GM12878 (cell line): ENCODE measurements at regions of chr6 and their contacts with region 1.

Region 1: GRCh38 chr6:11833626-11834592 is 55.3 kb upstream of the ADTRP start:
- DNase-seq: peak; percentile 84
- ATAC-seq: peak; percentile 84
- H3K4me3 ChIP-seq: peak overlapping the region; percentile 0; the same call in 1 of the 2 replicates
- H3K27ac ChIP-seq: peak overlapping the region; percentile 95
- H3K4me1 ChIP-seq: peaks cover 45% of the 10 kb centered on the region
- H3K27me3 ChIP-seq: no peaks in the 10 kb centered on the region
- CTCF ChIP-seq: no peak
- EP300 ChIP-seq: peak; percentile 97 to 100
- POLR2A ChIP-seq: peak; percentile 41; the same call in 1 of the 2 replicates
- RAD21 ChIP-seq: peak; percentile 42; the same call in 1 of the 2 replicates

Region 2: DNA sequence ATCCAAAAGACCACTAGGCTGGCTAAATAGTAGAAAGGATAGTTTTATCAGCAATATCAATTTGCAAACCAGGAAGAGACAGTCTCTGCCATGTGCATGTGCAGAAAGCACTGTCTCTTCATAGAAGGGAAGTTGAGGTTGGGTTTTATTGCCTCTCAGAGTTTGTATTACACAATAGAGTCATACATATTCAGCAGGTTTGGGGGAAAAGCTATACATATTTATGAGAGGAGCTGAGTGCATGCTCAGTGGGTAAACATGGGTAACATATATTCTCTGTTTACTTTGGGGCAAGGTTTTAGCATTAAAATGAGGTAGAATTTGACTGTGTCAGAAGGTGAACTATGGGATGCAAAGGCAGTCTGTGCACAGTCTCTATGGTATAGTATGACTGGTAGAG is 281.5 kb before region 1 on chr6:
- CTCF ChIA-PET with region 1: no interaction called
- POLR2A ChIA-PET with region 1: no interaction called
- RAD21 ChIA-PET with region 1: no interaction called
- SMC1A ChIA-PET with region 1: no interaction called
- in situ Hi-C with region 1: no loop called
- intact Hi-C with region 1: no loop called
- DNase-seq: no peak
- ATAC-seq: no peak; the same call in 2 of the 3 replicates
- H3K4me3 ChIP-seq: no peak overlapping the region
- H3K27ac ChIP-seq: no peak overlapping the region
- H3K4me1 ChIP-seq: no peaks in the 10 kb centered on the region
- H3K27me3 ChIP-seq: no peaks in the 10 kb centered on the region
- CTCF ChIP-seq: no peak
- EP300 ChIP-seq: no peak
- POLR2A ChIP-seq: no peak
- RAD21 ChIP-seq: no peak

Region 3: DNA sequence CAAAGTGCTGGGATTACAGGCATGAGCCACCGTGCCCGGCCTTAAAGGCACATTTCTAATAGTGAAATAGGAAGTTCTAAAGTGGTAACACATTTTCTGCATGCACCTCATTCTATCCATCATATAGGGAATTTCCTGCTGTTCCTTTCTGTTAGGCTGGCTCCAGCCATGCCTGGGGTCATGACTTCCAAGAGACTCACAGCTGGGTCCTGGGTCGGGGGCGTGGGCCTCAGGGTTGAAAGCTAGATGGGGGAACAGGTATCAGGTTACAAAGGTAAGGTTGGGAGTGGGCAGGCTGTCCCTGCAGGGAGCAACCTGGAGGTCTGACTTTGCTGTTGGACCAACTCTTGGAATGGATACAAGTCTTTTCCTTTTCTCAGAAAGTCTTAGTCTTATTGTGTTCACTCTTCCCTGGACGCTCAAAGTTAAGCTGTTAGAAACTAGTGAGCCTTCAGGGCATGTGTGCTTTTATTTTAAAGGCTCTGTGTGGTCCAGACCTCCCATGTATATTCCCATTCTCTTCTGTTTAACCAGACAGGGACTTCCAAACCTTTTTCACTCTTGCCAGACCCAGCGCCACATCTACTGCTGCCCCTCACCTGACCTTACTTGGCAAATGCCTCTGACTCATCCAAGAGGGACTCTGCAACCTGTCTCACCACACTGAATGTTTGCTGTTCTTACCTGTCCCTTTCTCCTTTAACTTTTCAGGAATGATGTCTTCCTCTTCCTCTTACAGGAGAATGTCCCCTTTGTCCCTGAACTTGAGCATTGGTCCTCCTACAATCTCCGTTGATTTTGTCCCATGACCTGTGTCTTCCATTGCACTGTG is 231.9 kb before region 1 on chr6:
- CTCF ChIA-PET with region 1: no interaction called
- POLR2A ChIA-PET with region 1: no interaction called
- RAD21 ChIA-PET with region 1: no interaction called
- SMC1A ChIA-PET with region 1: no interaction called
- in situ Hi-C with region 1: no loop called
- intact Hi-C with region 1: no loop called
- DNase-seq: no peak
- ATAC-seq: no peak
- H3K4me3 ChIP-seq: no peak overlapping the region
- H3K27ac ChIP-seq: no peak overlapping the region
- H3K4me1 ChIP-seq: no peaks in the 10 kb centered on the region
- H3K27me3 ChIP-seq: peaks cover 0 to 2% of the 10 kb centered on the region in 2 experiments; a peak in 2 of 4 replicates
- CTCF ChIP-seq: no peak
- EP300 ChIP-seq: no peak
- POLR2A ChIP-seq: no peak
- RAD21 ChIP-seq: no peak

Region 4: DNA sequence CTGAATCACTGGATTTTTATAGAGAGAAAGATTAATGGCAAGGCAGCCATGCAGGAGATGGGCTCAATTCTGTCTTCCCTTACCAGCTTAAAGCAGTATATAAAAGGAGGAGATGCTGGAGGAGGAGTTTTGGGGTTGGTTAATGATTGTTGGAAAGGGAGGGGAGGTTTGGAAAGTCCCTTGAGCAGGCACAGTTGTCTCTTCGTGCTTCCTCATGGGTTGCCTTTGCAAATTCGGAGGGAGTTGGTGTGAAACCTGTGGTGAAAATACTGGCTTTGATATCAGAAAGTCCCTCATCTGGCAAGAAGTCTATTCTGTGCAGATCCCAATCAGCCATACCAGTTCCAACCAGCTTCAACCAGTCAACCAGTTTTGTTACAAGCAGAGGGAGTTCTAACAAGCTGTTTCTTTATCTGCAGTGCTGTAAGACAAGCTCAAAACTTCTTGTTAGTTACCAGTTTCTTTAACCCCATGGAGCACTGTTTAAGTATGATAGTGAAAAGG is 285.2 kb after region 1 on chr6:
- CTCF ChIA-PET with region 1: no interaction called
- POLR2A ChIA-PET with region 1: interaction called, 4 read pairs
- RAD21 ChIA-PET with region 1: no interaction called
- SMC1A ChIA-PET with region 1: interaction called, 3 read pairs
- in situ Hi-C with region 1: no loop called
- intact Hi-C with region 1: loop called (anchors 2 kb)
- DNase-seq: peak; percentile 97
- ATAC-seq: peak; percentile 83
- H3K4me3 ChIP-seq: peak overlapping the region; percentile 34; the same call in 1 of the 2 replicates
- H3K27ac ChIP-seq: peak overlapping the region; percentile 92
- H3K4me1 ChIP-seq: peaks cover 34% of the 10 kb centered on the region
- H3K27me3 ChIP-seq: no peaks in the 10 kb centered on the region
- CTCF ChIP-seq: no peak
- EP300 ChIP-seq: peak; percentile 82 to 90; a peak in 3 of 4 replicates
- POLR2A ChIP-seq: no peak
- RAD21 ChIP-seq: no peak